ENCODE measurements at regions of chr2 and their contacts with region 1.

Region 1: DNA sequence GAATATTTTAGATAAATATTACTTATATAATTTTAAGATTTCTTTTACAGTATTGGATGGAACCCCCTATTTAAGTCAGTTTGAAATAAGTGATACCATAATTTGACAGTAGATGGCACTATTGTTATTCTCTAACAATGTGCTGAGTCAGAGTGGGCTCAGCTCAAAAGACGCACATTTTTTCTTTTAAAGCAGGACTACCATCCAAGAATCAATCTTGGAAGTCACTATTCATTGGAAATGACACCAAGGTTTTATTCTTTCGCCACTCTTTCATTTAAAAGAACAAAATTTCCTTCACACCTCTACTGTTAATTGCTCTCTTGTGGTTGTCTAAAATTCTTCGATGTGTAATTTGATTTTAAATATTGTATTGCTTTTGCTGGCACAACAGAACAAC is 32.6 kb upstream of the SPAG16 start:
- DNase-seq: no peak

Region 2: GRCh38 chr2:212686285-212686895 is 565.2 kb before region 1 on chr2:
- intact Hi-C with region 1: loop called (anchors 10 kb)
- DNase-seq: no peak

Region 3: GRCh38 chr2:213185147-213185822 is 66.3 kb before region 1 on chr2:
- intact Hi-C with region 1: no loop called
- DNase-seq: no peak

Region 4: DNA sequence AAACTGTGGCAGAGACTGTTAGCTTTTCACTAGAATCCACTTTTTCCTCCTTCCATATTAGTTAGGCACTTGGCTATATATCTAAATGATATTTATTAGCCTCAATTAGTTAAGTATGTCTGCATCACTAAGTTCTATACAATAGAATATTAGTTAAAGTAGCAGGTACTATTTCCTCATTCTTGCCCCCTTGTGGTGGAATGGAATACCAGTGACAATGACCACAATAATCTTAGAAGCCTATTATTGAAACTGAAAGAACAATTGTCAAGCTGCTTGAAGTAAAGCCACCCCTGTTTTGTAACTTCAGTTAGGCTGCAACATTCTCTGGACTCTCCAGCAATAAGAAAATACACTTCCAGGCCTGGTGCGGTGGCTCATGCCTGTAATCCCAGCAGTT is 682.9 kb after region 1 on chr2:
- intact Hi-C with region 1: loop called (anchors 10 kb)
- DNase-seq: no peak

Measured in cardiac septum (tissue), 1 donor.